K562 (cell line): ENCODE measurements at regions of chr2 and their contacts with region 1.

Region 1: DNA sequence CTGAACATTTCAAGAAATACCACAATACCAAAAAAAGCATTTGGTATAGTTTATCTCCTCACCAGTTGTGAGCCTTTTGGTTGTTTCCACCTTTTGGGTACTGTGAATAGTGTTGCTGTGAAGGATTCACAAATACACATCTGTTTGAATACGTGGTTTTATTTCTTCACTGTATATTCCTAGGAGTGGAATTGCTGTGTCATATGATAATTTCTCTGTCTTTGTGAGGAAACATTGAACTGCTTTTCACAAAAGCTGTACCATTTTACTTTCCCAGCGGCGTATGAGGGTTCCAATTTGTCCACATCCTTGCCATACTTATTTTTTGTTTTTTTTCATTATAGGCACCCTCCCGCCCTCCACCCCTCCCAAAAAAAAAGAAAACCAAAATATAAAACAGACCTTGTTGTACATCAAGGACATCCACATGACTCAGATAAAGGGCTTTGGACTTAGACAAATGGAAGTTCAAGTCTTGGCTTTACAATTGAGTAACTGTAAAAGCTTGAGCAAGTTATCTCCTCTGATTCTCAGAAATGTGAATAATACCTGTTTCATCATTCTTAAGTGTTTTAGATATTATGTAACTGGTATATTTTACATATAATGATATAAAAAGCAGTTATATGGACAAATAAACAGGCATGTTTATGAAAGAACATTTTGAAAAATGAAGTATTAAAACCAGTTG is 19.0 kb downstream of the UBE2E3 start:
- DNase-seq: no peak
- ATAC-seq: peak; percentile 67
- H3K4me3 ChIP-seq: no peak overlapping the region
- H3K27ac ChIP-seq: peak overlapping the region; percentile 48
- H3K4me1 ChIP-seq: peaks cover 2 to 5% of the 10 kb centered on the region in 2 experiments; a peak in 3 of 5 replicates
- H3K27me3 ChIP-seq: no peaks in the 10 kb centered on the region
- CTCF ChIP-seq: no peak
- EP300 ChIP-seq: peak; percentile 8; the same call in 1 of the 2 replicates
- POLR2A ChIP-seq: no peak
- RAD21 ChIP-seq: no peak

Region 2: DNA sequence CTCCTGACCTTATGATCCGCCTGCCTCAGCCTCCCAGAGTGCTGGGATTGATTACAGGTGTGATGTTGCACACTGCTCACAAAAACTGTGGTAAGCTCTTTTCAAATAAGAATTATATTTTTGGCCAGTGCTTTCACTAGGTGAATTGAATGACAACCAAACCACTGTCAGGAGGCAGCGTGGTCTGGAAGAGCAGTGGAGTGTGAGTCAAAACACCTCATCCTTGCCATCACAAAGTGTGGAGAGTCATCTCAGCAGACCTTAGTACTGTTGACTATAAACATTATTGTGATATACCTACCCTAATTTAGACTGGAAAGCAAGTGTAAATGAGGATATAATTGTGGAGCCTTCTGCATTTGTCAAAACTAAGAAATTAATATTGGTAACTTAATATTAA is 42.2 kb after region 1 on chr2:
- CTCF ChIA-PET with region 1: no interaction called
- POLR2A ChIA-PET with region 1: no interaction called
- in situ Hi-C with region 1: loop called (anchors 5 kb)
- intact Hi-C with region 1: no loop called
- DNase-seq: no peak
- ATAC-seq: no peak
- H3K4me3 ChIP-seq: no peak overlapping the region
- H3K27ac ChIP-seq: no peak overlapping the region
- H3K4me1 ChIP-seq: no peaks in the 10 kb centered on the region
- H3K27me3 ChIP-seq: no peaks in the 10 kb centered on the region
- CTCF ChIP-seq: no peak
- EP300 ChIP-seq: no peak
- POLR2A ChIP-seq: no peak
- RAD21 ChIP-seq: no peak

Region 3: GRCh38 chr2:181085734-181086133 is 86.3 kb after region 1 on chr2:
- CTCF ChIA-PET with region 1: no interaction called
- POLR2A ChIA-PET with region 1: no interaction called
- in situ Hi-C with region 1: no loop called
- intact Hi-C with region 1: no loop called
- DNase-seq: no peak
- ATAC-seq: no peak
- H3K4me3 ChIP-seq: no peak overlapping the region
- H3K27ac ChIP-seq: no peak overlapping the region
- H3K4me1 ChIP-seq: no peaks in the 10 kb centered on the region
- H3K27me3 ChIP-seq: no peaks in the 10 kb centered on the region
- CTCF ChIP-seq: no peak
- EP300 ChIP-seq: no peak
- POLR2A ChIP-seq: no peak
- RAD21 ChIP-seq: no peak